ENCODE measurements at regions of chrX and their contacts with region 1.

Region 1: GRCh38 chrX:123960042-123960611 is 1.4 kb upstream of the STAG2 start:
- DNase-seq: peak; percentile 75 to 91 (median 87)
- ATAC-seq: peak; percentile 82
- H3K4me3 ChIP-seq: peak overlapping the region; percentile 87
- H3K4me3 Mint-ChIP-seq: peak overlapping the region; percentile 88 to 99 (median 97)
- H3K27ac ChIP-seq: peak overlapping the region; percentile 99
- H3K27ac Mint-ChIP-seq: peak overlapping the region; percentile 97 to 100 (median 98)
- H3K4me1 ChIP-seq: peaks cover under 1 to 2% of the 10 kb centered on the region in 2 donors
- H3K4me1 Mint-ChIP-seq: peaks cover 6 to 28% (median 17%) of the 10 kb centered on the region in 7 donors
- H3K27me3 ChIP-seq: no peaks in the 10 kb centered on the region
- H3K27me3 Mint-ChIP-seq: peaks cover 0 to 4% (median 0%) of the 10 kb centered on the region in 5 donors

Region 2: DNA sequence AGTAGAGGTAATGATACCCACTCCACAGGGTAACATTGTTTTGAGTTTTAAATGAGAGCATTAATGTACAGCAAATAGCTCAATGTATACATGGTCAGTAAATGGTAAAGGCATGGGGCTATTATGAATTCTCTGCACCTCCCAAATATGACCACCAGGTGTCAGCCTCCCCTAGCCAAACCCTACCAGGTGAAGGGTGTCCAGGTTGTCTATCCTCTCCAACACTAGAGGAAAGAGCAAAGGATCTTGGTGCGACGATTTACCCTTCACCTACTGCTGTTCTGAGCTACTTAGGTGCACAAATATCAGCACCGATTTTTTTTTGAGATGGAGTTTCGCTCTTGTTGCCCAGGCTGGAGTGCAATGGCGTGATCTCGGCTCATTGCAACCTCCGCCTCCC is 126.7 kb before region 1 on chrX:
- CTCF ChIA-PET with region 1: no interaction called
- POLR2A ChIA-PET with region 1: interaction called, 5 read pairs
- intact Hi-C with region 1: loop called (anchors 1 kb)
- DNase-seq: peak; percentile 18 to 61 (median 52)
- ATAC-seq: peak; percentile 95
- H3K4me3 ChIP-seq: no peak overlapping the region
- H3K4me3 Mint-ChIP-seq: no peak overlapping the region
- H3K27ac ChIP-seq: no peak overlapping the region
- H3K27ac Mint-ChIP-seq: no peak overlapping the region
- H3K4me1 ChIP-seq: no peaks in the 10 kb centered on the region
- H3K4me1 Mint-ChIP-seq: no peaks in the 10 kb centered on the region
- H3K27me3 ChIP-seq: no peaks in the 10 kb centered on the region
- H3K27me3 Mint-ChIP-seq: peaks cover 0 to 5% (median 0%) of the 10 kb centered on the region in 5 donors

Region 3: GRCh38 chrX:123976706-123977316 is 16.7 kb after region 1 on chrX:
- CTCF ChIA-PET with region 1: interaction called, 3 read pairs
- POLR2A ChIA-PET with region 1: interaction called, 4 read pairs
- intact Hi-C with region 1: loop called (anchors 1 kb)
- DNase-seq: peak in 4 of 9 donors; percentile 9 to 28 (median 22)
- ATAC-seq: peak; percentile 57
- H3K4me3 ChIP-seq: no peak overlapping the region
- H3K4me3 Mint-ChIP-seq: peak overlapping the region in 7 of 10 donors; percentile 30 to 64 (median 53)
- H3K27ac ChIP-seq: no peak overlapping the region
- H3K27ac Mint-ChIP-seq: peak overlapping the region in 6 of 9 donors; percentile 4 to 66 (median 32)
- H3K4me1 ChIP-seq: peaks cover 5 to 12% of the 10 kb centered on the region in 2 donors
- H3K4me1 Mint-ChIP-seq: peaks cover 24 to 70% (median 58%) of the 10 kb centered on the region in 7 donors
- H3K27me3 ChIP-seq: no peaks in the 10 kb centered on the region
- H3K27me3 Mint-ChIP-seq: no peaks in the 10 kb centered on the region

Region 4: GRCh38 chrX:124098089-124098488 is 138.0 kb after region 1 on chrX:
- CTCF ChIA-PET with region 1: no interaction called
- POLR2A ChIA-PET with region 1: interaction called, 3 read pairs
- intact Hi-C with region 1: loop called in 1 of 2 experiments (anchors 1 kb)
- DNase-seq: peak in 5 of 9 donors; percentile 8 to 34 (median 30)
- ATAC-seq: peak; percentile 55
- H3K4me3 ChIP-seq: no peak overlapping the region
- H3K4me3 Mint-ChIP-seq: no peak overlapping the region
- H3K27ac ChIP-seq: no peak overlapping the region
- H3K27ac Mint-ChIP-seq: no peak overlapping the region
- H3K4me1 ChIP-seq: no peaks in the 10 kb centered on the region
- H3K4me1 Mint-ChIP-seq: peaks cover 0 to 2% (median 0%) of the 10 kb centered on the region in 7 donors
- H3K27me3 ChIP-seq: no peaks in the 10 kb centered on the region
- H3K27me3 Mint-ChIP-seq: no peaks in the 10 kb centered on the region

Region 5: GRCh38 chrX:124346117-124346876 is 386.2 kb after region 1 on chrX and contains the start of gene SH2D1A:
- CTCF ChIA-PET with region 1: no interaction called
- POLR2A ChIA-PET with region 1: interaction called, 3 read pairs
- intact Hi-C with region 1: loop called (anchors 5 kb)
- DNase-seq: peak in 8 of 9 donors; percentile 20 to 50 (median 34)
- ATAC-seq: peak; percentile 70
- H3K4me3 ChIP-seq: peak within 1 kb of the TSS; percentile 62
- H3K4me3 Mint-ChIP-seq: peak within 1 kb of the TSS; percentile 79 to 99 (median 96)
- H3K27ac ChIP-seq: peak within 1 kb of the TSS; percentile 72
- H3K27ac Mint-ChIP-seq: peak within 1 kb of the TSS; percentile 85 to 98 (median 95)
- H3K4me1 ChIP-seq: peaks cover 36 to 47% of the 10 kb centered on the region in 2 donors
- H3K4me1 Mint-ChIP-seq: peaks cover 12 to 51% (median 44%) of the 10 kb centered on the region in 7 donors
- H3K27me3 ChIP-seq: no peaks in the 10 kb centered on the region
- H3K27me3 Mint-ChIP-seq: no peaks in the 10 kb centered on the region
- total RNA-seq, gene SH2D1A: 23.8 to 48.2 (median 37.9) TPM

Region 6: DNA sequence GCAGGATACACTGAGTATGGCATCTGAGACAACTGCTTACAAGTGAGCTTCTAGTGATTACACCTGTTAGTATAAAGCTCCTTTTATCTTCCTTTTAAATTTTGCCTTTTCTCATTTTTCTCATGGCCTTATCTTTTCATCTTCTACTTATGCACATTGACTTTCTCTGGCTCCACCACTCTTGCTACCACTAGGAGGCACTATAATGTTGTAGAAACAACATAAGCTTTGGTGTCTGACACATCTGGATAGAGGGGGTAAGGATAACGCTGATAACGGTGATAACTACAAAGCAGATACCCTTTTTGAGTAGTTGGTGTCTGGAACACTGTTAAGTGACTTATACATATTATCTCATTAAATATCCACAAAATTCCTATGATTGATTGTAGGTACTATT is 1172.2 kb after region 1 on chrX:
- CTCF ChIA-PET with region 1: no interaction called
- POLR2A ChIA-PET with region 1: no interaction called
- intact Hi-C with region 1: loop called in 1 of 2 experiments (anchors 5 kb)
- DNase-seq: peak in 1 of 9 donors; percentile 2
- ATAC-seq: no peak
- H3K4me3 ChIP-seq: no peak overlapping the region
- H3K4me3 Mint-ChIP-seq: no peak overlapping the region
- H3K27ac ChIP-seq: no peak overlapping the region
- H3K27ac Mint-ChIP-seq: no peak overlapping the region
- H3K4me1 ChIP-seq: no peaks in the 10 kb centered on the region
- H3K4me1 Mint-ChIP-seq: no peaks in the 10 kb centered on the region
- H3K27me3 ChIP-seq: no peaks in the 10 kb centered on the region
- H3K27me3 Mint-ChIP-seq: no peaks in the 10 kb centered on the region

Measured in naive thymus-derived CD4-positive, alpha-beta T cell (primary cell).